Activated CD4-positive, alpha-beta T cell treated with anti-CD3 and anti-CD28 coated beads, Interleukin-2, amount 10 ng/mL, durations not matched to agents 24 days and 14 days (primary cell): ENCODE measurements at regions of chr2 and their contacts with region 1.

Region 1: GRCh38 chr2:197113275-197113711 is 186.8 kb upstream of the PGAP1 start:
- DNase-seq: no peak
- H3K4me3 Mint-ChIP-seq: no peak overlapping the region
- H3K27ac Mint-ChIP-seq: no peak overlapping the region
- H3K4me1 Mint-ChIP-seq: peaks cover 18% of the 10 kb centered on the region
- H3K27me3 Mint-ChIP-seq: no peaks in the 10 kb centered on the region

Region 2: GRCh38 chr2:197191177-197191939 is 78.1 kb after region 1 on chr2:
- intact Hi-C with region 1: loop called (anchors 2 kb)
- DNase-seq: peak; percentile 73
- H3K4me3 Mint-ChIP-seq: no peak overlapping the region
- H3K27ac Mint-ChIP-seq: peak overlapping the region; percentile 69
- H3K4me1 Mint-ChIP-seq: peaks cover 68% of the 10 kb centered on the region
- H3K27me3 Mint-ChIP-seq: no peaks in the 10 kb centered on the region